Sigmoid colon (tissue), 7 donors: ENCODE measurements at regions of chr12 and their contacts with region 1.

Region 1: DNA sequence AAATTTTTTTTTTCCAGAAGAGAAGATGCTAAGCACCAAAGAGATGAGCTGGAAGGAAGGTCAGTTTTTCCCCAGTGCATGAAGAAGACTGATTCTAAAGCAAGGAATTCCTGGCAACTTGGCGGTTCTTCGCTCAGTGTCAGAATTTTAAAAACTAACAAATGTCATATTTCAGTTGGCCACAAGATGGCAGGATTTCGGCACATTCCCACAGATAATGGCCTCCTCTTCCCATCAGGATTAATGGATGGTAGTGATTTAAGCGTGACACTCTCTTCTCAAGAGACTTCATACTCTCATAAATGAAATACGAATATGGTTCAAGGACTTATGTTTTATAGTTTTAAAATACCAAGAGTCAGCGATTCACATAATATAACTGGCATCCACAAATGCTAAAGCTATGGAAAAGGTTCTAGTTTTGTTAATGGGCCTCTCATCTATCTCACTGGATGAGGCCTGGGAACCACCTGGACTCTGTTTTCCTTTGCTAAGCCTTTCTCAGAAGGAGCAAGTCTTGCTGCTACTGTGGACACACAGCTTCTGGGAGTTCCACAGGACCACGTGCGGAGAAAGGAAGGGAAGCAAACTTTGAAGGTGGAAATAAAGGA is 46.1 kb upstream of the PTPRO start:
- DNase-seq: no peak
- H3K4me3 ChIP-seq: no peak overlapping the region
- H3K27ac ChIP-seq: peak overlapping the region in 1 of 4 donors; percentile 78
- H3K4me1 ChIP-seq: peaks cover 0 to 49% (median 41%) of the 10 kb centered on the region in 4 donors
- H3K27me3 ChIP-seq: no peaks in the 10 kb centered on the region
- CTCF ChIP-seq: peak; percentile 43 to 72 (median 67)
- EP300 ChIP-seq: no peak
- POLR2A ChIP-seq: no peak

Region 2: DNA sequence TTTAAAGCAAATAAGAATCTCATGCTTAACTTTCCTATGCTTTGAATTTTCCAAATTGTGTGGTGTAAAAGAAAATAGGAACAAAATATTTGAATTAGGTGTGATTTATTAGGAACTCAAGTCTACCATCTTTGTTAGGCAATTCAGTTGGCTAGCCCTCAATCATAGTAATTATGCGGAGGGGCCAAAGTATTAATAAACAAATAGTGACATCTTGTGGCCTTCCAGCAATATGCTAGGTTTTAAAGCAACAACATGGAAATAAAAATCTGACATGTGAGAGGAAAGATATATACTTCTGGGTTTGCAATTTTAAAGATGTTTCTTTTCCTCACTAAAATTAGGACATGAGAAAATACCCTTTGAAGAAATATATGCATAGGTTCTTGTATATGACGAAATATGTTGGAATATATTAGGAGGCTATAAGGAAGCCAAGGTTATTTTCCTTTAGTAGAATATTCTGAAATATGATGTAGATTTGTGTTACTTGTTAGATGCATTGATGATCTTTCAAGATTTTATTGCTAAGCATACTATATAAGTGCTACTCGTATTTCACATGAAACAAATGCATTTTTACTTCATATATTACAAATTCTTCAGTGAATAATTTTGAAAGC is 246.5 kb after region 1 on chr12:
- intact Hi-C with region 1: loop called (anchors 2 kb)
- DNase-seq: no peak
- H3K4me3 ChIP-seq: no peak overlapping the region
- H3K27ac ChIP-seq: no peak overlapping the region
- H3K4me1 ChIP-seq: no peaks in the 10 kb centered on the region
- H3K27me3 ChIP-seq: no peaks in the 10 kb centered on the region
- CTCF ChIP-seq: peak; percentile 39 to 48 (median 47)
- EP300 ChIP-seq: no peak
- POLR2A ChIP-seq: no peak

Region 3: GRCh38 chr12:15584366-15585041 is 308.3 kb after region 1 on chr12:
- intact Hi-C with region 1: loop called (anchors 2 kb)
- DNase-seq: no peak
- H3K4me3 ChIP-seq: no peak overlapping the region
- H3K27ac ChIP-seq: no peak overlapping the region
- H3K4me1 ChIP-seq: no peaks in the 10 kb centered on the region
- H3K27me3 ChIP-seq: no peaks in the 10 kb centered on the region
- CTCF ChIP-seq: peak in 3 of 4 experiments; percentile 53 to 62 (median 60)
- EP300 ChIP-seq: no peak
- POLR2A ChIP-seq: no peak

Region 4: GRCh38 chr12:15789220-15790171 is 513.3 kb after region 1 on chr12 and contains the start of gene EPS8:
- intact Hi-C with region 1: loop called (anchors 10 kb)
- DNase-seq: peak; percentile 96
- H3K4me3 ChIP-seq: peak within 1 kb of the TSS; percentile 63 to 91 (median 83)
- H3K27ac ChIP-seq: peak within 1 kb of the TSS; percentile 94 to 97 (median 94)
- H3K4me1 ChIP-seq: peaks cover 0 to 37% (median 14%) of the 10 kb centered on the region in 4 donors
- H3K27me3 ChIP-seq: no peaks in the 10 kb centered on the region
- CTCF ChIP-seq: no peak
- EP300 ChIP-seq: no peak
- POLR2A ChIP-seq: peak; percentile 72 to 77
- total RNA-seq, gene EPS8: 108 to 132 (median 119) TPM

Region 5: DNA sequence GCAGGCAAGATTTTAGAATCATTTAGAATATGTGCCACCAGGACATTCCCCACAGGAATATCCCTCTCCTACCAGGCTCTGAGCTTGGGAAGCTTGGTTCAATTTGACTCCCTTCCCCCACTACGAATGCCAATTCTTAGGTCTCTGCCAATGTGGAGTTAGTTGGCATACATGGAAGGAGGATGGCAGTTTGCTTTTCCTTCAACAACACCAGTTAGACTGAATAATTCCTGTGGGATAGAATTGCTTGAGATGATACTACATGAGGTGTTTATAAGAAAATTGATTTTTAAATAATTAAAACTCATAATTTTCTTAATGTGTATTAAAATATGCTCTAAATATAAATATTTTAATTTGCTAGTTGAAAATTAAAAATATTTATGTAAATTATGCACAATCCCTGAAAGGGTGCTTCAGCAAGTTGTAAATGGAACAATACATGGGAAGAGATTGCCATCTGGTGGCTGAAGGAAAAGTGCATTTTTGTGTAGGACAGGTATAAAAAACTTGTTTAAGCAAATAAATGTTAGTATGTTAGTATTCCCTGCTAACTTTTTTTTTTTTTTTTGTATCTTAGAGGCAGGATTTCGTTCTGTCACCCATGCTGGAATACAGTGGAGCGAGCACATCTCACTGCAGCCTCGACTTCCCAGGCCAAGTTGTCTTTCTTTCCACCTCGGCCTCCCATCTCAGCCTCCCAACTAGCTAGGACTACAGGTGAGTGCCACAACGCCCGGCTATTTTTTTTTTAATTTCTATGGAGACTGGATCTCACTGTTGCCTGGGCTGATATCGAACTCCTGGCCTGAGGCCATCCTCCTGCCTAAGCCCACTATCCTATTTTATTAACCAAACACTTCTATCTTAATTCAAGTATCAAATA is 580.1 kb after region 1 on chr12:
- intact Hi-C with region 1: loop called (anchors 2 kb)
- DNase-seq: no peak
- H3K4me3 ChIP-seq: no peak overlapping the region
- H3K27ac ChIP-seq: no peak overlapping the region
- H3K4me1 ChIP-seq: peaks cover 0 to 7% (median 4%) of the 10 kb centered on the region in 4 donors
- H3K27me3 ChIP-seq: no peaks in the 10 kb centered on the region
- CTCF ChIP-seq: peak; percentile 77 to 87 (median 78)
- EP300 ChIP-seq: no peak
- POLR2A ChIP-seq: no peak

Region 6: GRCh38 chr12:15882118-15882971 is 606.2 kb after region 1 on chr12 and contains the start of gene STRAP:
- intact Hi-C with region 1: loop called (anchors 10 kb)
- DNase-seq: peak; percentile 99
- H3K4me3 ChIP-seq: peak within 1 kb of the TSS; percentile 79 to 89 (median 84)
- H3K27ac ChIP-seq: peak within 1 kb of the TSS; percentile 93 to 99 (median 96)
- H3K4me1 ChIP-seq: peaks cover 0 to 41% (median 33%) of the 10 kb centered on the region in 4 donors
- H3K27me3 ChIP-seq: no peaks in the 10 kb centered on the region
- CTCF ChIP-seq: no peak
- EP300 ChIP-seq: peak in 2 of 4 donors; percentile 38 to 76
- POLR2A ChIP-seq: peak; percentile 99
- total RNA-seq, gene STRAP: 52.8 to 68.5 (median 63.0) TPM